BJ (cell line): ENCODE measurements at regions of chr2 and their contacts with region 1.

Region 1: DNA sequence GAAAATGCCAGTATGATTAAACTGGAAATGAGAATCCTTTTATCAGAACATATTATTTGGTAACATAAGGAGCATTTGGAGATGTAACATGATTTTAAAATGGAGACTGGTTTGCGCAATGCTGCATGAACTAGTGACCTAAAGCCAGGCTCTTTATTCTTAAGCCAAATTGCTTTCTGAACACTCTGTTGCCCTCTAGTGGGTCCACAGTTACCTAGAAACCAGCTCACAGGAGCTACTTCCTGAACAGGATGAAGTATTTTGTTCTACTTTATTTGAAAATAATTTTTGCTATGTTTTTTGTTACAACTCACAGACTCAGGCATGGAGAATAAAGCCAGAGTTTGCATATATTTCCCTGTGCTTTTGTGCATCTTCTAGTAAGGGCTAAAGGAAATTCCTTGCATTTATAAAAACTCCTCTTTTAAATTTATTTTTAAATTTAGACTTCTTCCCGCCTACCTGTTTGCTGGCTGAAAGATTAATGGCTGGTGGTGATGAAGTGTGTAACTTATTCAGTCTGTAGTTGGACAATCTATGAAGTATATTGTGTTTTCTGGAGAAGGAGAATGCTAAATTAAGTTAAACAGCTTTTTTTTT is 146.7 kb downstream of the PARD3B start:
- DNase-seq: peak; percentile 39
- H3K4me3 ChIP-seq: no peak overlapping the region
- H3K27me3 ChIP-seq: no peaks in the 10 kb centered on the region
- CTCF ChIP-seq: peak; percentile 80

Region 2: DNA sequence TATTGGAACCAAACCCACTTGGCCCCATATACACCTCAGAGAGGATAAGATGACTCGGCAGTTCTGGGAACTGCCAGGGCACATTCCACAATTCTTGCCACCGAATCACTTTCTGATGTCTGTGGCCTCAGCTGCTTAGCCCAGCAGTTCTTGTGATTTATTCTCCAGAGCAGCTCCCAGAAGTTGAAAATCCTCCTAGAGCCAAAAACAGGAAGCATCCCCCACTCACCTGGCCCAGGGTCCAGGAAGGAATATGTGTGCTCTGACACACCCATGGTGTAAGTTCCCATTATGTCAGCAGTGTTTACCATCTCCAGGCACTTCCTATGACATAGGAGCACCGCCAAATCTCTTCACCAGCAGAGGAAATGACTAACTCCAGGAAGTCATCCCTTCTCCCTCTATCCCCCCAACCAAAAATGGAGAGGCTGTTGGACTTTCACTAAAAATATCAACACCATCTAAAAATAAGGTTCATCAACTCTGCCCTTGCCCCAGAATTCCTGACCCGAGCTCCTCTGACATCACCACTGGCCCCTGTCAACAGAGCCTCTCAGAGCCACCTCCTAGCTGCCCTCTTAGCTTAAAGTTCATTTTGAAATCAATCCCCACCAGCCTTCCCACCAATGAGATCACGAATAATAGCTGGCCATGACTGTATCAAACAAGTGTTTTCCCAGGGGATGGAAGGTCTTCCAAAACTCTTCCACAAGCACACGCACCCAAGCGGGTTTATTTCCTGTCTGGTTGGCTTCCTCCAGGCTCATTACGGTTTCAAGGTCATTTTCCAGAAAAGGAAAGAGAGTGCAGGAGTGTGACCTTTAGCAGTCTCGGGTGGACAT is 369.9 kb before region 1 on chr2:
- CTCF ChIA-PET with region 1: interaction called, 13 read pairs
- POLR2A ChIA-PET with region 1: no interaction called
- DNase-seq: no peak
- H3K4me3 ChIP-seq: no peak overlapping the region
- H3K27me3 ChIP-seq: no peaks in the 10 kb centered on the region
- CTCF ChIP-seq: no peak

Region 3: DNA sequence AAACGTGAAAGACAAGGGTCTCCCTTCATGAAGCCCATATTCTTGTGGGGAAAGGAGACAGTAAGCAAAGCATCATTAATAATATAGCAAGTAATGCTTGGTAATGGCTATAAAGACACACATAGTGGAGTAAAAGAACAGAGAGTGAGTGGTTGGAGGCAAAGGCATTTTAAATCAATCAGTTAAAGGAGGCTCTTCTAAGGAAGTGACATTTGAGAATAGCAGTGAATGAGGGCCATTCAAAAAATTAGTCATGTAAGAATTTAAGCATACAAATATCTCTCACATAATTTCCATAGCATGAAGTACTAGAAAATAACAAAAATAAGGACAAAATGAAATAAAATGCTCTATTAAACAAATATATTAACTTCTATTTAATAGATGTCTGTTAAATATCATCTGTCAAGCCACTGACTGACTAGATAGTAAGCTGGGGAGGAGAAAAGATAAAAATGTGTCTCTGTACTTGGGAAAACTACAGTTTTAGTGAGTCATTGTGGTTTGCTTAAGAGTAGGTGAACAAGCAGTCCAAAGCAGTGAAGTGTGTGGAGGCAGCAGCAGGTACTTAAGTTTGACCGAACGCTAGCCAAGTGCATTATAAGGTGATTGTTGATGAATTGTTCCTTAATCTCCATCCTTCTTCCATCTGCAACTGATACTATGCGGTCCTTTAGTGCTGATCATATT is 13.4 kb after region 1 on chr2:
- CTCF ChIA-PET with region 1: no interaction called
- POLR2A ChIA-PET with region 1: no interaction called
- DNase-seq: no peak
- H3K4me3 ChIP-seq: no peak overlapping the region
- H3K27me3 ChIP-seq: no peaks in the 10 kb centered on the region
- CTCF ChIP-seq: no peak